Common myeloid progenitor, CD34-positive (primary cell): ENCODE measurements at regions of chr5 and their contacts with region 1.

Region 1: DNA sequence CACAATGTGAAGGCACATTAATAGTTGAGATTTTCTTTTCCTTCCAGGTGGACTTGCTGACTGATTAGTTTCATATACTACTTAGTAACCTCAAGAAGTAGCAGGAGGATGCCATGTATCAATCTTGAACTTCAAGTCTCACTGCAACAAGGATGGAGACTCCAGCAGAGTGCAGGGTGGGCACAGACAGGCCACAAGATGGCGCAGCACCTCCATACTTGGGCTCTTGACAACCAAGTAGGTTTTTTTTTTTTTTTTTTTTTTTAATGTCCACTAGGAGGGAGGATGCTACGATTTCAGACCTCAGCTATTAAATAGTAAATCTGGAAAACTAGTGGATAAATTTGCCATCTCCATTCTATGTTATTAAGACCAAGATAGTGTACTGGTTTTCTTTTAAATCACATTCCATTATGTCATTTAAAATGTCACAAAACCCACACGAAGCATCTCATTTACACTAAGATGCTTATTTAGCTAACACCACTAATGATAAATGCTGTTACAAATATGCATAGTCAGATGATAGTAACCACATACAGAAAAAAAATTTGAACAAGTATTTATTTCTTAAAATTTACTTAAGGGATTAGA is 58.6 kb downstream of the IL6ST start:
- DNase-seq: peak; percentile 86 to 93 (median 90)
- H3K4me3 ChIP-seq: no peak overlapping the region
- H3K27ac ChIP-seq: no peak overlapping the region
- H3K4me1 ChIP-seq: peaks cover 0 to 7% (median 1%) of the 10 kb centered on the region in 4 experiments
- H3K27me3 ChIP-seq: no peaks in the 10 kb centered on the region

Region 2: GRCh38 chr5:55923177-55923771 is 12.9 kb before region 1 on chr5:
- CTCF ChIA-PET with region 1: interaction called, 12 read pairs
- POLR2A ChIA-PET with region 1: interaction called, 3 read pairs
- DNase-seq: peak; percentile 23 to 81 (median 75)
- H3K4me3 ChIP-seq: peak overlapping the region; percentile 8 to 79 (median 60)
- H3K27ac ChIP-seq: no peak overlapping the region
- H3K4me1 ChIP-seq: peaks cover 0 to 30% (median 14%) of the 10 kb centered on the region in 4 experiments
- H3K27me3 ChIP-seq: no peaks in the 10 kb centered on the region

Region 3: GRCh38 chr5:55982957-55983381 is 46.8 kb after region 1 on chr5:
- CTCF ChIA-PET with region 1: interaction called, 16 read pairs
- POLR2A ChIA-PET with region 1: no interaction called
- DNase-seq: peak in 1 of 3 donors; percentile 10
- H3K4me3 ChIP-seq: no peak overlapping the region
- H3K27ac ChIP-seq: no peak overlapping the region
- H3K4me1 ChIP-seq: no peaks in the 10 kb centered on the region
- H3K27me3 ChIP-seq: no peaks in the 10 kb centered on the region

Region 4: GRCh38 chr5:56200856-56201666 is 264.9 kb after region 1 on chr5:
- CTCF ChIA-PET with region 1: interaction called, 96 read pairs
- POLR2A ChIA-PET with region 1: no interaction called
- DNase-seq: peak; percentile 72 to 86 (median 78)
- H3K4me3 ChIP-seq: no peak overlapping the region
- H3K27ac ChIP-seq: no peak overlapping the region
- H3K4me1 ChIP-seq: no peaks in the 10 kb centered on the region
- H3K27me3 ChIP-seq: no peaks in the 10 kb centered on the region

Region 5: GRCh38 chr5:56264417-56265025 is 328.3 kb after region 1 on chr5:
- CTCF ChIA-PET with region 1: interaction called, 44 read pairs
- POLR2A ChIA-PET with region 1: no interaction called
- DNase-seq: peak; percentile 43 to 59 (median 53)
- H3K4me3 ChIP-seq: no peak overlapping the region
- H3K27ac ChIP-seq: no peak overlapping the region
- H3K4me1 ChIP-seq: no peaks in the 10 kb centered on the region
- H3K27me3 ChIP-seq: no peaks in the 10 kb centered on the region

Region 6: GRCh38 chr5:56270568-56271392 is 334.6 kb after region 1 on chr5:
- CTCF ChIA-PET with region 1: interaction called, 44 read pairs
- POLR2A ChIA-PET with region 1: no interaction called
- DNase-seq: peak; percentile 78 to 88 (median 87)
- H3K4me3 ChIP-seq: no peak overlapping the region
- H3K27ac ChIP-seq: no peak overlapping the region
- H3K4me1 ChIP-seq: peaks cover 0 to 5% (median 0%) of the 10 kb centered on the region in 4 experiments
- H3K27me3 ChIP-seq: no peaks in the 10 kb centered on the region

Region 7: GRCh38 chr5:56838409-56839039 is 902.3 kb after region 1 on chr5:
- CTCF ChIA-PET with region 1: interaction called, 23 read pairs
- POLR2A ChIA-PET with region 1: no interaction called
- DNase-seq: peak; percentile 71 to 81 (median 77)
- H3K4me3 ChIP-seq: peak overlapping the region in 5 of 7 experiments; percentile 20 to 70 (median 41)
- H3K27ac ChIP-seq: peak overlapping the region in 1 of 2 experiments; percentile 31
- H3K4me1 ChIP-seq: peaks cover 11 to 31% (median 19%) of the 10 kb centered on the region in 4 experiments
- H3K27me3 ChIP-seq: no peaks in the 10 kb centered on the region